ENCODE measurements at regions of chr3 and their contacts with region 1.

Region 1: GRCh38 chr3:179421500-179421899 is 29.8 kb downstream of the GNB4 start:
- DNase-seq: no peak
- ATAC-seq: peak; percentile 90

Region 2: GRCh38 chr3:178868681-178869080 is 552.8 kb before region 1 on chr3:
- intact Hi-C with region 1: no loop called
- DNase-seq: no peak
- ATAC-seq: no peak

Region 3: GRCh38 chr3:179015551-179016020 is 405.9 kb before region 1 on chr3:
- intact Hi-C with region 1: no loop called
- DNase-seq: no peak
- ATAC-seq: peak; percentile 86

Region 4: GRCh38 chr3:179558742-179559364 is 137.4 kb after region 1 on chr3:
- intact Hi-C with region 1: loop called (anchors 2 kb)
- DNase-seq: peak; percentile 59
- ATAC-seq: peak; percentile 13

Measured in Right ventricle myocardium superior (tissue), 1 donor.